ENCODE measurements at regions of chr14 and their contacts with region 1.

Region 1: DNA sequence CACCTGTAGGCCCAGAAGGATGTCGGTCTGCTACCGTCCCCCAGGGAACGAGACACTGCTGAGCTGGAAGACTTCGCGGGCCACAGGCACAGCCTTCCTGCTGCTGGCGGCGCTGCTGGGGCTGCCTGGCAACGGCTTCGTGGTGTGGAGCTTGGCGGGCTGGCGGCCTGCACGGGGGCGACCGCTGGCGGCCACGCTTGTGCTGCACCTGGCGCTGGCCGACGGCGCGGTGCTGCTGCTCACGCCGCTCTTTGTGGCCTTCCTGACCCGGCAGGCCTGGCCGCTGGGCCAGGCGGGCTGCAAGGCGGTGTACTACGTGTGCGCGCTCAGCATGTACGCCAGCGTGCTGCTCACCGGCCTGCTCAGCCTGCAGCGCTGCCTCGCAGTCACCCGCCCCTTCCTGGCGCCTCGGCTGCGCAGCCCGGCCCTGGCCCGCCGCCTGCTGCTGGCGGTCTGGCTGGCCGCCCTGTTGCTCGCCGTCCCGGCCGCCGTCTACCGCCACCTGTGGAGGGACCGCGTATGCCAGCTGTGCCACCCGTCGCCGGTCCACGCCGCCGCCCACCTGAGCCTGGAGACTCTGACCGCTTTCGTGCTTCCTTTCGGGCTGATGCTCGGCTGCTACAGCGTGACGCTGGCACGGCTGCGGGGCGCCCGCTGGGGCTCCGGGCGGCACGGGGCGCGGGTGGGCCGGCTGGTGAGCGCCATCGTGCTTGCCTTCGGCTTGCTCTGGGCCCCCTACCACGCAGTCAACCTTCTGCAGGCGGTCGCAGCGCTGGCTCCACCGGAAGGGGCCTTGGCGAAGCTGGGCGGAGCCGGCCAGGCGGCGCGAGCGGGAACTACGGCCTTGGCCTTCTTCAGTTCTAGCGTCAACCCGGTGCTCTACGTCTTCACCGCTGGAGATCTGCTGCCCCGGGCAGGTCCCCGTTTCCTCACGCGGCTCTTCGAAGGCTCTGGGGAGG is at the start of gene LTB4R:
- DNase-seq: peak; percentile 74
- ATAC-seq: peak; percentile 87
- H3K4me3 Mint-ChIP-seq: peak within 1 kb of the TSS; percentile 58
- H3K27ac Mint-ChIP-seq: peak within 1 kb of the TSS; percentile 81
- H3K4me1 Mint-ChIP-seq: peaks cover 66% of the 10 kb centered on the region
- H3K27me3 Mint-ChIP-seq: no peaks in the 10 kb centered on the region
- CTCF ChIP-seq: peak; percentile 63
- total RNA-seq, gene LTB4R: 11.6 to 11.7 TPM

Region 2: DNA sequence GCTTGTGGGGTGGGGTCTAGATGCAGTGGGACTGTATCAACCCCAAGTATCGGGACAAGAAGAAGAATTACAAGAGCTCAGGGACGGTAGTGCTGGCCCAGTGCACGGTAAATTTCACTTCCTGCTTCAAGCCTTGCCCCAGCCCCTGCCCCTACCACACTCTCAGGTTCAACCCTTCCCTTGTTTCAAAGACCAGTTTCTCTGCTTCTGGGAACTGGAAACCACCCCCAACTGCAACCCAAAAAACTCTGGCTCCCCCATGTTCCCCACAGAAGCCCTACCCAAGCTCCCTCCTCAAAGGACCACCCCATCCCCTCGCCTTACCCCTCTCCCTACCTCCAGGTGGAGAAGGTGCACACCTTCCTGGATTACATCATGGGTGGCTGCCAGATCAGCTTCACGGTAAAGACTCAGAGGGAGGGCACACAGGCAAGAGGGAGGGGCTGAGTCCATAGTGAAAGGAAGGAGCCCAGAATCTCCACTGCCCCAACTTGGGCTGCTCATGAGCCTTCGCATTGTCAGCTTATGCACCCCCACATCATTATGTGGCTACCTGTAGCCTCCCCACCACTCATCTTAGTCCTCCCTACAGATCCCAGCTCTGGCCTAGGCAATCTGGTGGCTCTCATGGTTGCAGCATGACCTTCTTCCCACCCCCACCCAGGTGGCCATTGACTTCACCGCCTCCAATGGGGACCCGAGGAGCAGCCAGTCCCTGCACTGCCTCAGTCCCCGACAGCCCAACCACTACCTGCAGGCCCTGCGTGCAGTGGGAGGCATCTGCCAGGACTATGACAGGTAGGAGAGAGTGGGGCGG is 235.2 kb before region 1 on chr14:
- CTCF ChIA-PET with region 1: no interaction called
- POLR2A ChIA-PET with region 1: no interaction called
- intact Hi-C with region 1: no loop called
- DNase-seq: no peak
- ATAC-seq: no peak
- H3K4me3 Mint-ChIP-seq: no peak overlapping the region
- H3K27ac Mint-ChIP-seq: peak overlapping the region; percentile 55
- H3K4me1 Mint-ChIP-seq: peaks cover 18% of the 10 kb centered on the region
- H3K27me3 Mint-ChIP-seq: no peaks in the 10 kb centered on the region
- CTCF ChIP-seq: no peak

Region 3: DNA sequence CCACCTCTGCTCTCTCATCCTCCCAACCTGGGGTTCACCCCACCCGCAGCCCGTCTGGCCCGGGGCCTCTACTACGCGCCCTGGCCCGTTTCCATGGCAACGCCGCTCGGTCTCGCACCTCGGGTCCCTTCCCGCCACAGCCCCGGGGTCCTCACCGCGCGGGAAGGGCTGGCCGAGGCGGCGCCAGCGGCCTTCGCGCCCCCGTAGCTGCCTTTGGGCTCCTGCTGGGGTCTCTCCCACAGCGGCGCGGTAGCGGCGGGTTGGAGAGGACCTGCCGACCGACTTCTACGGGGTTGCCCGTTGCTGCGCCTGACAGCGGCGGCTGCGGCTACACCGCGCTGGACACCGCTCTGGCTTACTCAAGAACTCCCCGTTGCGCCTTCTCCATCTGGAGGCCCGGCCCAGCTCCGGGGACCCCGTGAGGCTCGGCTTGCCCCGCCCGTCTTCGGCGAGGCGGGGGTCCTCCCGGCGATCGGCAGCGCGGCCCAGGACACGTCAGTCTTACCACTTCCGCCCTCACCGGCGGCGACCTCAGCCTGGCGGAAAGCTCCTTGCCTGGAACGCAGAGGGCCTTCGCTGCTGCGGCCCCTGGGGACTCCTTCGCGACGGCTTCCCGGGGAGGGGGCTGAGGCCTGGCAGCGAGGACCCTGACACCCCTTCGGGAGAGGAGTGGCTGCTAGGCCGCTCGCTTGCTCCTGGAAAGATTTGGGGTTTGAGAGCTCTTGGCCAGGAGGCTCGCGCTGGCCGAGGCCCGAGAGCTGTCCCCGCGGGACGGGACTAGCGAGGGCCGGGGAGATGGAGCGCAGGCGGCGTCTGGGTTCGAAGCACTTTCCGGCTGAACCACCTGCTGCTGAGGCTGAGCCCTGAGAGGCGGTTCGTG is 115.5 kb before region 1 on chr14 and contains the start of gene TM9SF1:
- CTCF ChIA-PET with region 1: interaction called, 14 read pairs
- POLR2A ChIA-PET with region 1: interaction called, 4 read pairs
- intact Hi-C with region 1: no loop called
- DNase-seq: peak; percentile 91
- ATAC-seq: peak; percentile 90
- H3K4me3 Mint-ChIP-seq: peak within 1 kb of the TSS; percentile 95
- H3K27ac Mint-ChIP-seq: peak within 1 kb of the TSS; percentile 98
- H3K4me1 Mint-ChIP-seq: peaks cover 50% of the 10 kb centered on the region
- H3K27me3 Mint-ChIP-seq: no peaks in the 10 kb centered on the region
- CTCF ChIP-seq: no peak
- total RNA-seq, gene TM9SF1: 16.3 to 18.0 TPM

Region 4: DNA sequence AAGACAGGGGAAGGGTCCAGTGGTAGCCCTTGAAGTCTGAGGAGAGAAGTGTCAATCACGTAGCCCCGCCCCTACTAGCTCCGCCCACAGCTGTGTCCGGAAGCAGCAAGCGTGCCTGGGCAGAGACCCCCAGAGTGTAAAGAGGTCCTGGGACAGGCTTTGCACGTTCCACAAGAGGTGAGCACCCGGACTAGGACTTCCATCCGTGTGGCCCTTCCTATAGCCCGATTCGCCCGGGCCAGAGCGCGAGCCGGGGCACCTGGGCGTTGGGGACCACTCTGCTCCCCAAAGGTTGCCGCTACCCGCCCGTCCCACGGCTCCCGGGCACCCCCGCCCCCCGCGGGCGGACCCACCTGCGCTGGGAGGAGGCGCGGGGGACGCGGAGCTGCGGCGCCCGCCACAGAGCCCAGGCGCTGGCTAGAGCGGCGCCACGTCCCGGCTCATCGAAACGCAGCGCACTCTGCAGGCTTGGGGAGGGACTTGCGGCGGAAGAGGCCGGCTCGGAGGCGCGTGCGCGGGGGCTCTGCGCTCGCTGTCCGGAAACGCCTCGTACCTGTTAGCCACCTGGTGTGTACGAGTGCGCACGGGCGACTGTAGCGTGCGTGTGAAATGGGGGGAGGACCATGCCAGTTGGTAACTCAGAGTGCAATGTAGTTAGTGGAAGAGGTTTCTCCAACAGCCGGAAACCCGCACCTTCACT is 39.6 kb before region 1 on chr14 and contains the start of gene RABGGTA:
- CTCF ChIA-PET with region 1: interaction called, 26 read pairs
- POLR2A ChIA-PET with region 1: interaction called, 8 read pairs
- intact Hi-C with region 1: no loop called
- DNase-seq: peak; percentile 92
- ATAC-seq: peak; percentile 85
- H3K4me3 Mint-ChIP-seq: peak within 1 kb of the TSS; percentile 82
- H3K27ac Mint-ChIP-seq: peak within 1 kb of the TSS; percentile 94
- H3K4me1 Mint-ChIP-seq: peaks cover 39% of the 10 kb centered on the region
- H3K27me3 Mint-ChIP-seq: no peaks in the 10 kb centered on the region
- CTCF ChIP-seq: peak; percentile 77
- total RNA-seq, gene RABGGTA: 37.6 to 42.7 TPM

Region 5: DNA sequence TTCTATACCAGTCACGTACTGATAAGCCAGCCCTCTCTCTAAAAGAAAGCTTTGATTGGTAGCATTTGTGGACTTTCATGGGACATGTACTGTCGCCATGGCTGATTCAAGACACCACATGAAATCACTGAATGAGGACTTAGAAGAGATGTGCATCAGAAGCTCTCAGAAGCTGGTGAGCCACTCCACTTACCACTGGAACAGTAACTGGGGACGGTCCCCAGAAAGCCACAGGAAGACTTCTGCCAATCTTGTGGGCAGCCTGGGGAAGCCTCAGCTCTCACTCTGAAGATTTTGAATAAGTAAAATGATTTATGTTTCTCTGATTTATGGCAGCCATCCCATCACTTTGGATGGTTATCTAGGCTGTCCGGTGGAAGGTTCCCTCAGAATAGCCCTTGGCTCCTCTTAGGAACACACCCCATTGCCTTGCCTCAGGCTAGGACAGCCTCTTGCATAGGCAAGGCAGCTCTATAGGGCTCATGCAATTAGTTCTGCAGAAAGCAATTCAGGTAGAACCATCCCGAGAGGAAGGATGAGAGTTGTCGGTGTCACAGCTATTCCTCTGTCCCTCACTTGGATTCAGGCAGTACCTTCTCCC is 21.2 kb before region 1 on chr14:
- CTCF ChIA-PET with region 1: interaction called, 54 read pairs
- POLR2A ChIA-PET with region 1: interaction called, 5 read pairs
- intact Hi-C with region 1: no loop called
- DNase-seq: peak; percentile 91
- ATAC-seq: peak; percentile 96
- H3K4me3 Mint-ChIP-seq: no peak overlapping the region
- H3K27ac Mint-ChIP-seq: peak overlapping the region; percentile 40
- H3K4me1 Mint-ChIP-seq: peaks cover 21% of the 10 kb centered on the region
- H3K27me3 Mint-ChIP-seq: no peaks in the 10 kb centered on the region
- CTCF ChIP-seq: no peak

Region 6: DNA sequence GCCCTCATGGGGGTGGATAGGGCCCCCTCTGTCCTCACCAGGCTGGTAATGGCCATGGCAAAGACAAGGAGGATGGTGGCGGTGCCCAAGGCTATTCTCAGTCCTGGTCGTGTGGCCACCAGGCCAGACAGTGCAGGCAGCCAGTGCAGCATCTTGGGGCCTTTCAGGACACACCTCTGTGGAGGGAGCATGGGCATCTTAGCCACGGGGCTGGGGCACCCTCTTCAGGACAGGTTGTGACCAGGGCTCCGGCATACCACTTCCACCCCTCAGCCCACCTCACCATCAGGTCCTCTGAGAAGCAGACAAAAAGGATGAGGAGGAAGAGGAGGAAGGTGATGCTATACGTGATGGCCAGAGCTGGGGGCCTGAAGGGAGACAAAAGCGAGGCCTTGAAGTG is 13.1 kb after region 1 on chr14:
- CTCF ChIA-PET with region 1: interaction called, 138 read pairs
- POLR2A ChIA-PET with region 1: interaction called, 9 read pairs
- intact Hi-C with region 1: no loop called
- DNase-seq: no peak
- ATAC-seq: no peak
- H3K4me3 Mint-ChIP-seq: no peak overlapping the region
- H3K27ac Mint-ChIP-seq: no peak overlapping the region
- H3K4me1 Mint-ChIP-seq: peaks cover 14% of the 10 kb centered on the region
- H3K27me3 Mint-ChIP-seq: no peaks in the 10 kb centered on the region
- CTCF ChIP-seq: no peak

Region 7: DNA sequence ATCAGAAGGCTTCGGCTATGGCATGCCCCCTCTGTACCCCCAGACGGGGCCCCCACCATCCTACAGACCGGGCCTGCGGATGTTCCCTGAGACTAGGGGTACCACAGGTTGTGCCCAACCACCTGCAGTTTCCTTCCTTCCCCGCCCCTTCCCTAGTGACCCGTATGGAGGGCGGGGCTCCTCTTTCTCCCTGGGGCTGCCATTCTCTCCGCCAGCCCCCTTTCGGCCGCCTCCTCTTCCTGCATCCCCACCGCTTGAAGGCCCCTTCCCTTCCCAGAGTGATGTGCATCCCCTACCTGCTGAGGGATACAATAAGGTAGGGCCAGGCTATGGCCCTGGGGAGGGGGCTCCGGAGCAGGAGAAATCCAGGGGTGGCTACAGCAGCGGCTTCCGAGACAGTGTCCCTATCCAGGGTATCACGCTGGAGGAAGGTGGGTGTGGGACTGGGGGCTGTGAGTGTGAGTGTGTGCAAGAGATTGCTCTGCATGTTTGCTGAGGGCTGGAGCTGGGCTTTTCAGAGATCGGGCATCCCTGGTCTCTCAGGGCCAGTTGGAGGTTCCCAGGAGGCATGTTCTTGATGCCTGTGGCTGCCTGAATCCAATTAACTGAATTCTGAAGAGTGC is 65.6 kb after region 1 on chr14:
- CTCF ChIA-PET with region 1: no interaction called
- POLR2A ChIA-PET with region 1: no interaction called
- intact Hi-C with region 1: no loop called
- DNase-seq: no peak
- ATAC-seq: no peak
- H3K4me3 Mint-ChIP-seq: no peak overlapping the region
- H3K27ac Mint-ChIP-seq: no peak overlapping the region
- H3K4me1 Mint-ChIP-seq: no peaks in the 10 kb centered on the region
- H3K27me3 Mint-ChIP-seq: no peaks in the 10 kb centered on the region
- CTCF ChIP-seq: no peak

Region 8: DNA sequence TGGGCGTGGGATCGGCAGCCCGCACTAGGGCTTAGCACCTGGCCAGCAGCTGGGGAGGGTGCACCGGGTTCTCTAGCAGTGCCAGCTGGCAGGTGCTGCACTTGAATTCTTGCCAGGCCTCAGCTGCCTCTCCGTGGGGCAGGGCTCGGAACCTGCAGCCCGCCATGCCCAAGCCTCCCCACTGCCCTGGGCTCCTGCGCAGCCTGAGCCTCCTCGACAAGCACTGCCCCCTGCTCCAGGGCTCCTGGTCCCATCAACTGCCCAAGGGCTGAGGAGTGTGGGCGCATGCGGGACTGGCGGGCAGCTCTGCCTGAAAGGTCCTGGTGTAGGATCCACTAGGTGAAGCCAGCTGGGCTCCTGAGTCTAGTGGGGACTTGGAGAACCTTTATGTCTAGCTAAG is 162.3 kb after region 1 on chr14:
- CTCF ChIA-PET with region 1: no interaction called
- POLR2A ChIA-PET with region 1: no interaction called
- intact Hi-C with region 1: no loop called
- DNase-seq: no peak
- ATAC-seq: no peak
- H3K4me3 Mint-ChIP-seq: no peak overlapping the region
- H3K27ac Mint-ChIP-seq: no peak overlapping the region
- H3K4me1 Mint-ChIP-seq: no peaks in the 10 kb centered on the region
- H3K27me3 Mint-ChIP-seq: no peaks in the 10 kb centered on the region
- CTCF ChIP-seq: no peak

Region 9: DNA sequence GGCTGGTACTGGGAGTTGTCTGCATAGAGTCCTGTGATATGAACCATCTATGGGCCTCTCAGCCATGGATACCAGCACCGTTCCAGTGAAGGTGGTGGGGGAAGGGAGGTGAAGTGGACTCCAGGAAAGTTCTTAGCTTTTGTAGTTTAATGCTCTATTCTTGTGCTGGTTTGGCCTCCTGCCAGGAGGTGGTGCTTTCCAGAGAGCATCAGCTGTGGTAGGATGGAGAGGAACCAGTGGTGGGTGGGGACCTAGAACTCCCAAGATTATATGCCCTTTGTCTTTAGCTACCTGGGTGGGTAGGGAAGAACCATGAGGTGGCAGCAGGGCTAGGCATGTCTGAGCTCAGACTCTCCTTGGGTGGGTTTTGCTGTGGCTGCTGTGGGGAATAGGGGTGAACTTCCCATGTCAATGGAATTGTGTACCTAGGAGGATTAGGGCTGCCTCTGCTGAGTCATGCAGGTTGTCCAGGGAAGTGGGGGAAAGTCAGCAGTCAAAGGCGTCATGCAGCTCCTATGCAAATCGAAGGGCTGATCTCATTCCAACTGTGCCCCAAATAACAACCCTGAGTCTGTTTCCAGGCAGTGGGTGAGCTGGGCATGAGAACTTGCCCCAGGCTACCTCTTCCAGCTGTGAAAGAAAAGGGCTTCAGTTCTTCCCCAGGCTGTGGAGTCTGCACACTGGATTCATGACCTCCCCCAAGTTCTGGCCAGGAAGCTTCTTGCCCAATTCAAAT is 284.3 kb after region 1 on chr14:
- CTCF ChIA-PET with region 1: no interaction called
- POLR2A ChIA-PET with region 1: no interaction called
- intact Hi-C with region 1: no loop called
- DNase-seq: no peak
- ATAC-seq: no peak
- H3K4me3 Mint-ChIP-seq: no peak overlapping the region
- H3K27ac Mint-ChIP-seq: no peak overlapping the region
- H3K4me1 Mint-ChIP-seq: peaks cover 6% of the 10 kb centered on the region
- H3K27me3 Mint-ChIP-seq: peaks cover 18% of the 10 kb centered on the region
- CTCF ChIP-seq: no peak

Measured in activated CD8-positive, alpha-beta T cell treated with anti-CD3 and anti-CD28 coated beads for 36 hours (primary cell).